ENCODE measurements at regions of chr3 and their contacts with region 1.

Region 1: DNA sequence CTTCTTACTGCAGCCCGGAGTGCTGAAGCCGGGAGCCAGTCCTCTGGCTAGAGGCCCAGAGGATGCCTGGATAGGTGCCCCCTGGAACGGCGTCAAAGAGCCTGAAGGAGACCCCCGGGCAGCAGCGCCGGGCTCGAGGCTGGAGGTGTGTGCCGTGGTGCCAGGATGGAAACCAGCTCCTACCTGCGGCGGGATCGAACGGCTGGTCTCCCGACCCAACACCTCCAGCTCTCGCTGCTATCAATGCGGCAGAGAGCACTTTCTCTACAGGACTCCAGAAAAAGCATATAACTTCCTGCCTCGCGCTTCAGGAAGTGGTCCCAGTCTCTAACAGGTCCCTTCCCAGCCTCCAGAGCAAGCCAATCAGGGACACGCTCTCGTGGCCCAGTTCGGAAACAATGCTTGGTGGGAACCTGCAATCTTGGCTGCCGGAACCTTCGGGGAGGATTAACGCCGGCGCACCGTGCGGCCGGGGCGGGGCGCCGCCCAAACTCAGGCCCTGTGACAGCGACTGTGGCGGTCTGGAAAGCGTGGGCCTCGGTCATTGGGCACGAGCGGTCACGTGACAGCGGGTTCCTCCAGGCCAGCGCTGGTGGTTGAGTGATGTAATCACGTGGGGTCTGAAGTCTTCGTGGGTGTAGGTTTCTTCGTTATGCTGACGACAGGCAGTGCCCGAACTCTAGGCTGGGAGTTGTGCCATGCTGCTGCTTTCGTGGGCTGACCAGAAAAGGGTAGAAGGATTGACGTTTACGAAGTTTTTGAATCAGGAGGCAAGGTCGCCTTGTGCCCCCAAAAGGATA is at the start of gene SLC33A1:
- DNase-seq: peak; percentile 99
- ATAC-seq: peak; percentile 94
- H3K4me3 Mint-ChIP-seq: peak within 1 kb of the TSS; percentile 87
- H3K27ac Mint-ChIP-seq: peak within 1 kb of the TSS; percentile 100
- H3K4me1 Mint-ChIP-seq: peaks cover 16% of the 10 kb centered on the region
- H3K27me3 Mint-ChIP-seq: no peaks in the 10 kb centered on the region
- CTCF ChIP-seq: no peak
- total RNA-seq, gene SLC33A1: 18.5 to 19.8 TPM

Region 2: GRCh38 chr3:155753036-155753639 is 101.2 kb before region 1 on chr3:
- CTCF ChIA-PET with region 1: no interaction called
- POLR2A ChIA-PET with region 1: no interaction called
- intact Hi-C with region 1: loop called (anchors 10 kb)
- DNase-seq: no peak
- ATAC-seq: peak; percentile 51
- H3K4me3 Mint-ChIP-seq: no peak overlapping the region
- H3K27ac Mint-ChIP-seq: no peak overlapping the region
- H3K4me1 Mint-ChIP-seq: no peaks in the 10 kb centered on the region
- H3K27me3 Mint-ChIP-seq: no peaks in the 10 kb centered on the region
- CTCF ChIP-seq: peak; percentile 68

Region 3: DNA sequence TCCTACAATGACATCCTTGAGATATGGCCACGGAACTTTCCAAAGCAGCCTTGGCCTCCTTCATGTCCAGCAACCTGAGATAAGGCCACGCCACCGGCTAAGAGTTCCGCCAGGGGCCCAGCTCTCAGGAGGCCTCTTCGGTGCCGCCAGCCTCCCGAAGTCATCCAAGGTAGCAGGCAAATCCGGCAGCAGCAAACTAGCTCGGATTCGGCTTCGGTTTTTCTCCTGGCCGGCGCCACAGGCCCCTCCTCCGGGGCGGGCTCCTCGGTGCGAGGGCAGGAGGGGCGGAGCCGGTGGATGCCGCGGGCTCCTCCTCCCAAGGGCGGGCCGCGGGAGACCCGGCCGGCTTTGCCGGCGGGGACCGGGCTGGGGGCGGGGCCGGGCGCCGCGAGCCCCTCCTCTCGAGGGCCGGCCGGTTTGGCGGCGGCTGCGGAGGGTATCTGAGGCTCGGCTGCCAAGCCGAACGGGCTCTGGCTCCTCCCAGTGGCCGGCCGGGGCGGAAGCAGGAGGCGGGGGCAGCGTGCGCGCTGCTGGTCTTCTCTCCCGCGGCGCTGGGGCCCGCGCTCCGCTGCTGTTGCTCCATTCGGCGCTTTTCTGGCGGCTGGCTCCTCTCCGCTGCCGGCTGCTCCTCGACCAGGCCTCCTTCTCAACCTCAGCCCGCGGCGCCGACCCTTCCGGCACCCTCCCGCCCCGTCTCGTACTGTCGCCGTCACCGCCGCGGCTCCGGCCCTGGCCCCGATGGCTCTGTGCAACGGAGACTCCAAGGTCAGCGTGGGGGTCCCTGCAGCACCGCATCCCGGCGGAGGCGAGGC is 16.0 kb after region 1 on chr3 and contains the start of gene GMPS:
- CTCF ChIA-PET with region 1: interaction called, 5 read pairs
- POLR2A ChIA-PET with region 1: interaction called, 52 read pairs
- intact Hi-C with region 1: loop called (anchors 1 kb)
- DNase-seq: peak; percentile 94
- ATAC-seq: peak; percentile 94
- H3K4me3 Mint-ChIP-seq: peak within 1 kb of the TSS; percentile 87
- H3K27ac Mint-ChIP-seq: peak within 1 kb of the TSS; percentile 93
- H3K4me1 Mint-ChIP-seq: peaks cover 20% of the 10 kb centered on the region
- H3K27me3 Mint-ChIP-seq: no peaks in the 10 kb centered on the region
- CTCF ChIP-seq: no peak
- total RNA-seq, gene GMPS: 143 to 148 TPM

Measured in activated CD8-positive, alpha-beta T cell treated with anti-CD3 and anti-CD28 coated beads for 36 hours (primary cell).